Activated naive CD8-positive, alpha-beta T cell treated with anti-CD3 and anti-CD28 coated beads, Interleukin-2, amount 10 ng/mL, durations not matched to agents 7 days and 5 days (primary cell): ENCODE measurements at regions of chr10 and their contacts with region 1.

Region 1: GRCh38 chr10:73495884-73496674 is at the start of gene PPP3CB:
- DNase-seq: no peak
- ATAC-seq: peak; percentile 80
- H3K4me3 Mint-ChIP-seq: peak within 1 kb of the TSS; percentile 98
- H3K27ac Mint-ChIP-seq: peak within 1 kb of the TSS; percentile 96
- H3K4me1 Mint-ChIP-seq: peaks cover 28% of the 10 kb centered on the region
- H3K27me3 Mint-ChIP-seq: no peaks in the 10 kb centered on the region
- total RNA-seq, gene PPP3CB: 41.7 to 42.2 TPM

Region 2: GRCh38 chr10:73252445-73253224 is 243.4 kb before region 1 on chr10 and contains the start of gene MRPS16:
- POLR2A ChIA-PET with region 1: interaction called, 20 read pairs
- DNase-seq: peak; percentile 91
- ATAC-seq: peak; percentile 78
- H3K4me3 Mint-ChIP-seq: peak within 1 kb of the TSS; percentile 93
- H3K27ac Mint-ChIP-seq: peak within 1 kb of the TSS; percentile 82
- H3K4me1 Mint-ChIP-seq: peaks cover 22% of the 10 kb centered on the region
- H3K27me3 Mint-ChIP-seq: no peaks in the 10 kb centered on the region
- total RNA-seq, gene MRPS16: 73.5 to 78.4 TPM

Region 3: DNA sequence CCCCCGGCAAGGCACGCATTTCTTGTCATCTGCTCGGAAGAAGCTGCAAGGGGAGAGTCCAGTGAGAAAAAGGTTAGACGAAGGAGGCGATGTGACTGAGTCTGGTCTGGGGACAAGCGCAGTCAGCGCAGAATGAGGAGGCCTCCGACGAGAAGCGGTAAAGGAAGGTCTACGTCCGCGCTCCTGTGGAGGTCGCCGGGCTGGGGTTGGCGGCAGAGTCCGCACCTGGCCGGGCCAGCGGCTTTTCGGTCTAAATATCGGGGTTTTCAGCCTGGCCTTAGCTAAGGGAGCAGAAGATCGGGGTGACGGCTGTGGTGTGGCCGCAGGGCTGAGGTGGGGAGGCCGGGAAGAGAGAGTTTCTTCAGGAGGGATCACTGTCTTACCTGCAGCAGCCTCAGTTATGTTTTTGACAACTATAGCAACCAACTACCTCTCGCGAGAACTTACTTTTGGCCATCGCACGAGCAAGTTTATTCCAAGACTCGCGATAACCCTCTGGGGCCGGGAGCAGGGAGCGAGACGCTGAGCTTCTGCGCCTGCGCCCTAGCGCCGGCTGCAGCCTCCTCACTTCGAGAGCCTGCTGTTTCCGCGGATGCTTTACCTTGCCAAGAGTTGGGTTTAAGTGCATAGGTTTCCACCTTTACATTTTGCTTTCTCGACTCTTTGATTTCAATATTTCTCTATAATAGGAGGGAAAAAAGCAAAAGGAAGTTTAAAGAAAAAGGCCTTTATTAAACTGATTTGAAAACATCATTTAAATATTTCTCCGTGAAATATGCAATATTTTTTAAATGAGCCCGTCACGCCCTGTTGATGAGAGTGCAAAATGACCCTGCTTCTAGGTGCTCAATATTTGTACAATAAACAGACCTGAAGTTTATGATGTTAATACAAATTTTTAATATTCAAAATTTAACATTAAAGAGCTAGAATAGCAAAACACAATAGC is 137.5 kb before region 1 on chr10 and contains the start of gene CFAP70:
- POLR2A ChIA-PET with region 1: interaction called, 11 read pairs
- DNase-seq: peak; percentile 91
- ATAC-seq: peak; percentile 99
- H3K4me3 Mint-ChIP-seq: peak within 1 kb of the TSS; percentile 97
- H3K27ac Mint-ChIP-seq: peak within 1 kb of the TSS; percentile 91
- H3K4me1 Mint-ChIP-seq: peaks cover 9% of the 10 kb centered on the region
- H3K27me3 Mint-ChIP-seq: no peaks in the 10 kb centered on the region
- total RNA-seq, gene CFAP70: 2.0 to 2.2 TPM

Region 4: DNA sequence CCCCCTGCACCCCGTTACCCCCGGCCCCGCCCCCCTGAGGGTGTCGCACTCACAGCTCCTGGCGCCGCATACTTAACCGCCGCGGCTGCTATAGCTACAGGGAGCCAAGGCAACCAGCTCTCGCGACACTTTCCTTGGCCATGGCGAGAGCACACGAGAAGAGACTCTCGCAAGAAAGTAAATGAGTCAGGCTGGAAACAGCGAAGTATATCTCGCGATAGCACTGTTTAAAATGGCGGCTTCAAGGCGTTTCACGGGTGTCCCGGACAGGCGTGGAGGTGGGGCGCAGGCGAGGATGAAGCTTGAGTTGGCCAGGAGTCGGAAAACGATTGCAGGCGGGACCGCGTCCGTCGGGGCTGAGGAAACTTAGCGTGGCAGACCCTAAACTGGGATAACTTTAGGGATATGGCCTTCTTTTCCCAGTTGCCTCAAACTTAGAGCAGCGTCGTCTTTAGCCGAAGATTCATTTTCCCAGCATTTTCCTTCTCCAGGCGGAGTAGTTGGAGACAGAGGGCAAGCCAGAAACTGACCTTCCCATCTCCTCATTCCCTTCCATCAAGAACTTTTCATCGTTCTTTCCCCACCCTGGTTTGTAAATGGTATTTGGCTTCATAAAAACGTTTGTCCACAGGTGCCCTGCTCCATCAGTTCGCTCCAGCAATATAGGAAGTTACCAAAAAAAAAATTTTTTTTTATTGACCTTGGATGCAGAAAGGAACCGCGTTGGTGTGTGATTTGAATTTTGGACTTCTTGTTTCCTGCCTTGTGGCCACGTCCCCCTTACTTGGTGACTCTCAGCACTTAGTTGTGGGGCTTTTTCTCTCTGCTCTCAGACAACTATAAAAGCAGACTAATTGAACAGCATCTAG is 130.0 kb after region 1 on chr10:
- POLR2A ChIA-PET with region 1: interaction called, 11 read pairs
- DNase-seq: peak; percentile 89
- ATAC-seq: peak; percentile 95
- H3K4me3 Mint-ChIP-seq: peak overlapping the region; percentile 100
- H3K27ac Mint-ChIP-seq: peak overlapping the region; percentile 99
- H3K4me1 Mint-ChIP-seq: peaks cover 20% of the 10 kb centered on the region
- H3K27me3 Mint-ChIP-seq: no peaks in the 10 kb centered on the region